ENCODE measurements at regions of chr3 and their contacts with region 1.

Region 1: GRCh38 chr3:62676689-62677271 is 198.4 kb downstream of the CADPS start:
- DNase-seq: no peak
- ATAC-seq: no peak
- H3K4me3 ChIP-seq: no peak overlapping the region
- H3K4me3 Mint-ChIP-seq: no peak overlapping the region
- H3K27ac ChIP-seq: no peak overlapping the region
- H3K27ac Mint-ChIP-seq: no peak overlapping the region
- H3K4me1 ChIP-seq: no peaks in the 10 kb centered on the region
- H3K4me1 Mint-ChIP-seq: no peaks in the 10 kb centered on the region
- H3K27me3 ChIP-seq: no peaks in the 10 kb centered on the region
- H3K27me3 Mint-ChIP-seq: no peaks in the 10 kb centered on the region
- CTCF ChIP-seq: no peak

Region 2: GRCh38 chr3:62710751-62711150 is 34.0 kb after region 1 on chr3:
- CTCF ChIA-PET with region 1: no interaction called
- POLR2A ChIA-PET with region 1: no interaction called
- intact Hi-C with region 1: loop called (anchors 1 kb)
- DNase-seq: no peak
- ATAC-seq: no peak
- H3K4me3 ChIP-seq: no peak overlapping the region
- H3K4me3 Mint-ChIP-seq: no peak overlapping the region
- H3K27ac ChIP-seq: no peak overlapping the region
- H3K27ac Mint-ChIP-seq: no peak overlapping the region
- H3K4me1 ChIP-seq: no peaks in the 10 kb centered on the region
- H3K4me1 Mint-ChIP-seq: no peaks in the 10 kb centered on the region
- H3K27me3 ChIP-seq: no peaks in the 10 kb centered on the region
- H3K27me3 Mint-ChIP-seq: no peaks in the 10 kb centered on the region
- CTCF ChIP-seq: no peak

Region 3: DNA sequence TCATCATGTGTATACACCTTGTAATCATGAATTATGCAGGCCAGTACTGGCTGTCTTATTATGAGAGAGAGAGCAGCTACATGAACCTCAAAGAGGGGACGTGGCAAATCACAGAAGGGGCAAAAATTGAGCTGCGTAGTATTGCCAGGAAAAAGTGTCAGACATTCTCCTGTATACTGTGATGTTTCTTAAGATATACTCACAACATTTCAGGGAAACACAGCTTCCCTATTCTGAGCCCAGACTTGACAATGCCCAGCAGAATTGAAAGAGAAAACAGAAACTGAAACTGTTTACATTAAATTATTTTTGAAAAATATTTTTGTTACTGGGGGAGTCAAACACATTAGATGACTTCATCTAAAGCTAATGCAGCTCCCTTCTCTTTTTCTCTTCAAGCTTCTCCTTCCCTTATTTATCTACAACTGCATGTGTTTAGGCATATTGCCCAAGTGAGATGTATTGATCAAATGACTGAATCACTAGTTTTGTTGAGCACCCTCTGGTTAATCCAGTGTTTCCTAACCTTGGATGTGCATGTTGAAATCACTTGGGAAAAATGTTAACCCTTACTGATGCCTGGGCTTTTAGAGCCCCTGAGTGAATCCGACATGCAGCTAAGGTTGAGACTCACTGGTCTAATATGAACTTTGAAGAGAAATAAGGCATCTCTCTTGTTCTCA is 158.9 kb after region 1 on chr3:
- CTCF ChIA-PET with region 1: no interaction called
- POLR2A ChIA-PET with region 1: no interaction called
- intact Hi-C with region 1: no loop called
- DNase-seq: no peak
- ATAC-seq: no peak
- H3K4me3 ChIP-seq: no peak overlapping the region
- H3K4me3 Mint-ChIP-seq: no peak overlapping the region
- H3K27ac ChIP-seq: no peak overlapping the region
- H3K27ac Mint-ChIP-seq: no peak overlapping the region
- H3K4me1 ChIP-seq: no peaks in the 10 kb centered on the region
- H3K4me1 Mint-ChIP-seq: no peaks in the 10 kb centered on the region
- H3K27me3 ChIP-seq: no peaks in the 10 kb centered on the region
- H3K27me3 Mint-ChIP-seq: no peaks in the 10 kb centered on the region
- CTCF ChIP-seq: no peak